ENCODE measurements at regions of chr4 and their contacts with region 1.

Region 1: DNA sequence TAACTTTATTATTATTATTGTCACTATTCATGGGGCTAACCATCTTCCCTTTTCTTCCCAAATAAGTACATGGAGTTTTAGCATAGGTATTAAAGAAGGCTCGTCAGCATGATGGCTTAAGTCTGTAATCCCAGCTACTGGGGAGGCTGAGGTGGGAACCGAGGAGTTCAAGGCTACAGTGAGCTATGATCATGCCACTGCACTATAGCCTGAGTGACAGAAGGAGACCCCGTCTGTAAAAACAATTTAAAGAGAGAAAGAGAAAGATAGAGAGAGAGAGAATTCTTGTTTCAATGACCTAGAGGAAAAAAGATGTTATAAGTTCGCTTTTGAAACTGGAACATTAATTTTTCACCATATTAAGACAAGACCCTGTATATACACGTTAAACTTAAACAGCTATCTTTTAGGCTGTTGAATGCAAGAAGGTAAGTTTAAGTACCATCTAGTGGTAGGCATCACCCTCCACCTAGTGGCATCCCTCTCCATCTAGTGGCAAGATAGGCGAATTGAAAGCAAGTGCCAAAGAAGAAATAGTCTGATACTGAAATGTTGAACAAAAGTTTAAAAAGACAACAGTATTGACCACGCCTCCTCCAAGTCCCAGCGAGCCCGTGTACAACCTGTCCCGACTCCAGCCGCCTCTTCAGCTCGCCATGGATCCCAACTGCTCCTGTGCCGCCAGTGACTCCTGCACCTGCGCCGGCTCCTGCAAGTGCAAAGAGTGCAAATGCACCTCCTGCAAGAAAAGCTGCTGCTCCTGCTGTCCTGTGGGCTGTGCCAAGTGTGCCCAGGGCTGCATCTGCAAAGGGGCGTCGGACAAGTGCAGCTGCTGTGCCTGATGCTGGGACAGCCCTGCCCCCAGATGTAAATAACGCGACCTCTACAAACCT is 26.0 kb upstream of the YTHDC1 start:
- DNase-seq: peak in 8 of 9 experiments; percentile 6 to 80 (median 50)
- ATAC-seq: peak; percentile 90
- H3K4me3 ChIP-seq: peak overlapping the region; percentile 25 to 36
- H3K4me3 Mint-ChIP-seq: peak overlapping the region; percentile 85
- H3K27ac ChIP-seq: no peak overlapping the region
- H3K27ac Mint-ChIP-seq: no peak overlapping the region
- H3K4me1 ChIP-seq: peaks cover 4% of the 10 kb centered on the region
- H3K4me1 Mint-ChIP-seq: peaks cover 14% of the 10 kb centered on the region
- H3K27me3 ChIP-seq: no peaks in the 10 kb centered on the region
- H3K27me3 Mint-ChIP-seq: no peaks in the 10 kb centered on the region
- CTCF ChIP-seq: peak; percentile 87

Region 2: GRCh38 chr4:68342134-68342533 is 33.8 kb before region 1 on chr4:
- CTCF ChIA-PET with region 1: interaction called, 6 read pairs
- POLR2A ChIA-PET with region 1: no interaction called
- intact Hi-C with region 1: loop called (anchors 5 kb)
- DNase-seq: peak in 1 of 9 experiments; percentile 20
- ATAC-seq: no peak
- H3K4me3 ChIP-seq: no peak overlapping the region
- H3K4me3 Mint-ChIP-seq: peak overlapping the region; percentile 47
- H3K27ac ChIP-seq: peak overlapping the region in 1 of 2 experiments; percentile 31
- H3K27ac Mint-ChIP-seq: peak overlapping the region; percentile 46
- H3K4me1 ChIP-seq: peaks cover 77% of the 10 kb centered on the region
- H3K4me1 Mint-ChIP-seq: peaks cover 88% of the 10 kb centered on the region
- H3K27me3 ChIP-seq: no peaks in the 10 kb centered on the region
- H3K27me3 Mint-ChIP-seq: no peaks in the 10 kb centered on the region
- CTCF ChIP-seq: no peak

Region 3: DNA sequence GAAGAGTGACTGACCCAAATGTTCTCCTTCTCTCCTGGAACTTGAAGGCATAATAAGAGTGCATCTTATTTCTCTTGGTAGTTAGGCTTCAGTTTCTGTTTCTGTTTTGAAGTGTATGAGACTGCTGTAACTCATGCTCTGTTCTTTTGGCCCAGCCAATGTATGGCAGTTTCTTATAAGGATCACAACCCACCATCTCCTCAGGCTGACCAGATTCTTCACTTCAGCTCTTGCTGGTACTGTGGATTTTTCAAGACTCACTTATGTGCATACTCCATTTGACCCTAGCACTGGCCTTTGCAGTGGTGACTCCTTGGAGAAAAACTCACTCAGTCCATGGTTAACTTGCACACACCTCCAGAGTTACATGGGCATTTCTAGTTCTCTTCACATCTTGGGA is 16.4 kb before region 1 on chr4:
- CTCF ChIA-PET with region 1: interaction called, 34 read pairs
- POLR2A ChIA-PET with region 1: no interaction called
- intact Hi-C with region 1: no loop called
- DNase-seq: peak in 2 of 9 experiments; percentile 10 to 23
- ATAC-seq: peak; percentile 71
- H3K4me3 ChIP-seq: no peak overlapping the region
- H3K4me3 Mint-ChIP-seq: peak overlapping the region; percentile 1
- H3K27ac ChIP-seq: no peak overlapping the region
- H3K27ac Mint-ChIP-seq: peak overlapping the region; percentile 15
- H3K4me1 ChIP-seq: no peaks in the 10 kb centered on the region
- H3K4me1 Mint-ChIP-seq: peaks cover 9% of the 10 kb centered on the region
- H3K27me3 ChIP-seq: no peaks in the 10 kb centered on the region
- H3K27me3 Mint-ChIP-seq: peaks cover 6% of the 10 kb centered on the region
- CTCF ChIP-seq: no peak

Region 4: GRCh38 chr4:68434836-68435235 is 58.9 kb after region 1 on chr4:
- CTCF ChIA-PET with region 1: interaction called, 3 read pairs
- POLR2A ChIA-PET with region 1: no interaction called
- intact Hi-C with region 1: loop called in 1 of 2 experiments (anchors 5 kb)
- DNase-seq: no peak
- ATAC-seq: no peak
- H3K4me3 ChIP-seq: no peak overlapping the region
- H3K4me3 Mint-ChIP-seq: peak overlapping the region; percentile 7
- H3K27ac ChIP-seq: no peak overlapping the region
- H3K27ac Mint-ChIP-seq: peak overlapping the region; percentile 25
- H3K4me1 ChIP-seq: peaks cover 26% of the 10 kb centered on the region
- H3K4me1 Mint-ChIP-seq: peaks cover 47% of the 10 kb centered on the region
- H3K27me3 ChIP-seq: no peaks in the 10 kb centered on the region
- H3K27me3 Mint-ChIP-seq: no peaks in the 10 kb centered on the region
- CTCF ChIP-seq: no peak

Measured in CD8-positive, alpha-beta T cell (primary cell).